Ascending aorta (tissue), 2 donors: ENCODE measurements at regions of chr2 and their contacts with region 1.

Region 1: DNA sequence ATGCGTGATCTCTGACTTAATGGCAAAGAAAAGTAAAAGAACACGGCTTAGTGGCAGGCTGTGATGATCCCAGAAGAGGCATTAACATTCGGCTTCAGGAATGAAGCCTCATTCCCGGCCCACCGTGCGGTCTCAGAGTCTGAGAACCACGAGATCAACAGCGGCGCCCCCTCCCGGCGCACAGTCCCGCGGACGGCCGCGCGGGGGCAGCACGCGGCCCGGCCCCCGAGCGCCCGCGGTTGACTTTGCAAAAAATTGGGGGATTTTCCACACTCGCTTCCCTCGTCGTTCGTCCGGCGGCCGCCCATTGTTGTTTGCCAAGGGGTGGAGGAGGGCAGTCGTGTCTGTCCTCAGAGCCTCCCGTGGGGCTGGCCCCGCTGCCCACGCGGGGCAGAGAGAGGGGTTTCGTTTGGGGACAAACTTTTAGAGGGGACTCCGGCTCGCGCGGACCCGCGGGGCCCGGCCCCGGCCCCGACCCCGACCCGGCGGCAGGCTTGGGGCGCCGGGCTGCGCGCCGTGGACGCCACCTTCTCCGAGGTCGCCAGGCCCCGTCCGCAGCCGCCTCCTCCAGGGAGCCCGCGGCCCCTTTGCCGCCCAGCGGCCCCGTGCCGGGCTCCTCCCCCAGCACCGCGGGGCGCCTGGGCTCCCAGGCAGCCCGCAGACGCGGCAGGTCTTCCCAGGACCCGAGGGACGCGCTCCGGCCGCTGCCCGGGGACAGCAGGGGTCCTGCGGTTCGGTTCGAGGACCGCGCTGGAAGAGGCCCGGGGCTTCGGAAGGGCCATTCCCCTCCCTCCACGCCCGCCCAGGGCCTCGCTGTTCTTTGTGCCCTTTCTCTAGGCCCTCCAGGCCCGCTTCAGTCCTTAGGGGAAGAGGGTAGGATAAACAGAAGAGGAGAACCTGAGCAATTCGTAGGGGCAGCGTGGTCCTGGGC is 3.4 kb upstream of the HS6ST1 start:
- DNase-seq: peak; percentile 3 to 94
- H3K4me3 ChIP-seq: peak overlapping the region; percentile 49 to 74
- H3K27ac ChIP-seq: peak overlapping the region; percentile 68 to 77
- H3K4me1 ChIP-seq: peaks cover 13 to 19% of the 10 kb centered on the region in 2 donors
- H3K27me3 ChIP-seq: no peaks in the 10 kb centered on the region
- CTCF ChIP-seq: peak; percentile 71 to 94 (median 84)

Region 2: DNA sequence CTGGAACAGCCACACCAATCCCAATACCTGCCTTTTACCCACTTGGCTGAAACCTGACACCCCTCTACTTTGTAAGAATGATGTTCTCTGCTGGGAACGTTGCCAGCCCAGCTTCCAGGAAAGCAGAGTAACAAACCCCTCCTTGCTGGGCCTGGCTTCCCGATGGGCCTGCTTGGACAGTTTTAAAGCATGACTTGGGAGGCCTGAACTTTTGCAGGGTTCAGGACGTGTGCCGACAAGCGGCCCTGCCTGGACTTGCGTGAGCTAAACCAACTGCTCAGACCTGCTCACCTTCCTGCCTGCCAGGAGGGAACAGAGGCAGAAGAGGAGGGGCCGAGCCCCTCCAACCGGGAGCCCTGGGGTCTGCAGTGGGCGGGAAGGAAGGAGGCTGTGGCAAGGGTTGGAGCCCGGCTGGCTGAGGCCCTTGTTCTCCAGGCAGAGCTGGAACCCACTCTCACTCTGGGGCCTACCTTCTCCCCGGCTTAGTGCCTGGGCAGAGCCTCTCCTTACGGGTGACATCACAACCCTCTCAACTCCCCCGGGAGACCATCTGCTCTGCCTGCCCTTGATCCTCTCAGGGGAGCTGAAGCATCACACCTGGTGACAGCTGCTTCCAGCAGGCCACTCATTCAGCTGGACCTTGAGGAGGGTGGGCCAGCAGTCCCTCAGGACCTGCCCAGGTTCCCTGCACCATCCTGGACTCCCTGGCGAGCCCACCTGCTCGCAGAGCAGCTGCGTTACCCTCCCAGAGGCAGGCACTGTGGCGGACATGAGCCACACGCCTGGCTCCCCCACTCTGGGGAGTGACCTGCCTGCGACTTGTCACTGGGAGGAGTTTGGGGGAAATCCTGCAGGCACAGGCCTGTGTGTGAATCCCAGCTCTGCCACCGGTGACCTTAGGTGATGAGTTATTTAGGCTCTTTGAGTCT is 16.6 kb before region 1 on chr2:
- intact Hi-C with region 1: loop called (anchors 2 kb)
- DNase-seq: no peak
- H3K4me3 ChIP-seq: no peak overlapping the region
- H3K27ac ChIP-seq: peak overlapping the region; percentile 51 to 63
- H3K4me1 ChIP-seq: peaks cover 10 to 33% of the 10 kb centered on the region in 2 donors
- H3K27me3 ChIP-seq: no peaks in the 10 kb centered on the region
- CTCF ChIP-seq: no peak

Region 3: DNA sequence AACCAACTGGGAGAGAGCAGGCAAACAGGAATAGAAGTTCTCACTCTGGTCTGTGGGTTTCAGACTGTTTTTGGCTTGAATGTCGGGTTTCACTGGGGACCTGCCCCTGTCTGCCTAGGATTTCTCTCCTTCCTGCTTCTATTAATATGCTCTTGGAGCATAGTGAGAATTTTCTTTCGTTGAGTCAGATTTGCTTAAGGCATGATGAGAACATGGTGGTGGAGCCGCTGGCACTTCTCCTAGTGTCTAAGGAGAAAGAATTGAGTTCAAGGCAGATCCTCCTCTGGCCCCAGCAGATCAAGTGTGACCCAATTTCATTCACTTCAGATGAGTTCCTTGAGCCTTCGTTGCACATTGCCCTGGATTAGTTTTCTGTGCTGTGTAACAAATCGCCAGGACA is 100.5 kb after region 1 on chr2:
- intact Hi-C with region 1: loop called (anchors 2 kb)
- DNase-seq: peak in 1 of 2 donors; percentile 79
- H3K4me3 ChIP-seq: peak overlapping the region in 1 of 2 donors; percentile 8
- H3K27ac ChIP-seq: peak overlapping the region; percentile 88 to 89
- H3K4me1 ChIP-seq: peaks cover 5 to 35% of the 10 kb centered on the region in 2 donors
- H3K27me3 ChIP-seq: no peaks in the 10 kb centered on the region
- CTCF ChIP-seq: no peak

Region 4: DNA sequence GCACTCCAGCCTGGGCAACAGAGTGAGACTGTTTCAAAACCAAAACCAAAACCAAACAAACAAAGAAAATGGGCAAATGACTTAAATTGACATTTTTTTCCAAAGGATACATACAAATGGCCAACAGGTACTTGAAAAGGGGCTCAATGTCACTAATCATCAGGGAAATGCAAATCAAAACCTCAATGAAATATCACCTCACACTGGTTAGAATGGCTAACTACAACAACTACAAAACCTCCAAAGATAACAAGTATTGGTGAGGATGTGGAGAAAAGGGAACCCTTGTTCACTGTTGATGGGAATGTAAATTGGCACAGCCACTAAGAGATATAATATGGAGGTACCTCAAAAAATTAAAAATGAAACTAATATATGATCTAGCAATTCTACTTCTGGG is 209.8 kb after region 1 on chr2:
- intact Hi-C with region 1: loop called (anchors 2 kb)
- DNase-seq: no peak
- H3K4me3 ChIP-seq: no peak overlapping the region
- H3K27ac ChIP-seq: no peak overlapping the region
- H3K4me1 ChIP-seq: no peaks in the 10 kb centered on the region
- H3K27me3 ChIP-seq: no peaks in the 10 kb centered on the region
- CTCF ChIP-seq: peak; percentile 10 to 30 (median 14)

Region 5: GRCh38 chr2:128736689-128737545 is 414.9 kb after region 1 on chr2:
- intact Hi-C with region 1: loop called (anchors 10 kb)
- DNase-seq: peak in 1 of 2 donors; percentile 87
- H3K4me3 ChIP-seq: peak overlapping the region; percentile 50 to 58
- H3K27ac ChIP-seq: no peak overlapping the region
- H3K4me1 ChIP-seq: peaks cover 8 to 9% of the 10 kb centered on the region in 2 donors
- H3K27me3 ChIP-seq: no peaks in the 10 kb centered on the region
- CTCF ChIP-seq: peak; percentile 76 to 99 (median 99)